ENCODE measurements at regions of chr5 and their contacts with region 1.

Region 1: DNA sequence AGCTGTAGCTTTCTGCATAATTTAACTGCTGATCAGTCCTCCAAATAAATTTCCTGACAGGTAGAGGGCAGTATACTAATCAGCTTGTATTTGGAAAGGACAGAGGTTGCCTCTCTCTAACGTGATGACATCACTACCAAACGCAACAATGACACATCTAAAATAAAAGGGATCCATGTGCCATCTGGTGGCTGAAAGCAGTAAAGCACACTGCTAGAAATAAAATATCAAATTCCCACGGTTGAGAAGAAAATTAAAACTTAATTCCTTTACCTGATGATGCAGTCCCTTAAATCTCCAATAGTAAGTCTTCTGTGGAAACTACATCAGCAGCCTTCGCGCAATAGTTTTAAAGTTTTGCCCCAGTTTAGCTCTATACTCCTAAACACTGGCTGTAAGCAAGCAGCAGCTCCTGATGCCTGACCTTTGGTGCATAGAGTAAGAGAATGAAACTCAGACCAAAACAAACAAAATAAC is 54.5 kb downstream of the DIAPH1 start:
- DNase-seq: peak; percentile 17 to 95 (median 63)
- ATAC-seq: peak; percentile 98
- H3K4me3 ChIP-seq: no peak overlapping the region
- H3K4me3 Mint-ChIP-seq: no peak overlapping the region
- H3K27ac ChIP-seq: peak overlapping the region in 1 of 2 experiments; percentile 76
- H3K27ac Mint-ChIP-seq: peak overlapping the region; percentile 78
- H3K4me1 ChIP-seq: no peaks in the 10 kb centered on the region
- H3K4me1 Mint-ChIP-seq: peaks cover 33% of the 10 kb centered on the region
- H3K27me3 ChIP-seq: no peaks in the 10 kb centered on the region
- H3K27me3 Mint-ChIP-seq: no peaks in the 10 kb centered on the region
- CTCF ChIP-seq: peak; percentile 92

Region 2: GRCh38 chr5:140690941-140691924 is 873.0 kb before region 1 on chr5 and contains the starts of genes HARS1 and HARS2:
- CTCF ChIA-PET with region 1: no interaction called
- POLR2A ChIA-PET with region 1: no interaction called
- intact Hi-C with region 1: loop called (anchors 10 kb)
- DNase-seq: peak; percentile 58 to 92 (median 83)
- ATAC-seq: peak; percentile 88
- H3K4me3 ChIP-seq: peak within 1 kb of the TSS; percentile 84 to 94
- H3K4me3 Mint-ChIP-seq: peak within 1 kb of the TSS; percentile 99
- H3K27ac ChIP-seq: peak within 1 kb of the TSS; percentile 77 to 87
- H3K27ac Mint-ChIP-seq: peak within 1 kb of the TSS; percentile 98
- H3K4me1 ChIP-seq: peaks cover 23% of the 10 kb centered on the region
- H3K4me1 Mint-ChIP-seq: peaks cover 48% of the 10 kb centered on the region
- H3K27me3 ChIP-seq: no peaks in the 10 kb centered on the region
- H3K27me3 Mint-ChIP-seq: no peaks in the 10 kb centered on the region
- CTCF ChIP-seq: no peak
- total RNA-seq, gene HARS1: 67.3 to 70.2 TPM
- total RNA-seq, gene HARS2: 41.3 to 43.2 TPM

Region 3: DNA sequence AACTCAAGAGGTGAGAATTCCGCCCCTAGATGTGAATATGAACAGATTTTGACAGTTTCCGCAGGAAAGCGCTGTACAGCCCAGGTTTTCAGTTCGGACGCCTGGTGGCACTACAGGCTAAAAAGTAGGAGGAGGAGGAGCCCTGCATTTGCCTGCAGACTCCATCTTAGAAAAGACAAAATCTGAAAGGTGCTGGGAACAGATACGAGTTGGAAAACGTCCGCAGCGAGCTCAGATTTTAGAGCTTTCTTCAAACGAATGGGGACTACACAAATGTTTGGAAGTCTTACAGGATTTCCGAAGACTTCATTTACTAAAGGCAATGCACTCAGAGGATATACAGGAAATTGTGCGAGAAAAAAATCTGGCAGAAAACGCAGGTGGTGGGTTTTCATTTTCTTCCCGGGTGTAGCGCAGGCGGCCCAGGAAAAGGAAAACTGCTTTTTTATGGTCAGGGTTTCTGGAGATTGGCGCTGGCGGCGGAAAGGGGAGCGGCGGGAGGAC is 479.7 kb before region 1 on chr5:
- CTCF ChIA-PET with region 1: interaction called, 8 read pairs
- POLR2A ChIA-PET with region 1: no interaction called
- intact Hi-C with region 1: loop called (anchors 2 to 5 kb)
- DNase-seq: peak in 7 of 9 experiments; percentile 2 to 61 (median 23)
- ATAC-seq: peak; percentile 63
- H3K4me3 ChIP-seq: peak overlapping the region; percentile 31 to 43
- H3K4me3 Mint-ChIP-seq: peak overlapping the region; percentile 85
- H3K27ac ChIP-seq: no peak overlapping the region
- H3K27ac Mint-ChIP-seq: no peak overlapping the region
- H3K4me1 ChIP-seq: no peaks in the 10 kb centered on the region
- H3K4me1 Mint-ChIP-seq: peaks cover 9% of the 10 kb centered on the region
- H3K27me3 ChIP-seq: peaks cover 0 to 3% of the 10 kb centered on the region in 2 experiments
- H3K27me3 Mint-ChIP-seq: peaks cover 38% of the 10 kb centered on the region
- CTCF ChIP-seq: peak; percentile 46

Region 4: GRCh38 chr5:141223112-141223783 is 341.0 kb before region 1 on chr5 and contains the start of gene PCDHB14:
- CTCF ChIA-PET with region 1: interaction called, 10 read pairs
- POLR2A ChIA-PET with region 1: no interaction called
- intact Hi-C with region 1: loop called (anchors 5 kb)
- DNase-seq: peak in 2 of 9 experiments; percentile 23 to 42
- ATAC-seq: no peak
- H3K4me3 ChIP-seq: no peak within 1 kb of the TSS
- H3K4me3 Mint-ChIP-seq: no peak within 1 kb of the TSS
- H3K27ac ChIP-seq: no peak within 1 kb of the TSS
- H3K27ac Mint-ChIP-seq: no peak within 1 kb of the TSS
- H3K4me1 ChIP-seq: no peaks in the 10 kb centered on the region
- H3K4me1 Mint-ChIP-seq: peaks cover 3% of the 10 kb centered on the region
- H3K27me3 ChIP-seq: peaks cover 0 to 13% of the 10 kb centered on the region in 2 experiments
- H3K27me3 Mint-ChIP-seq: peaks cover 61% of the 10 kb centered on the region
- CTCF ChIP-seq: no peak
- total RNA-seq, gene PCDHB14: not detected

Region 5: GRCh38 chr5:141326088-141326854 is 238.0 kb before region 1 on chr5:
- CTCF ChIA-PET with region 1: interaction called, 25 read pairs
- POLR2A ChIA-PET with region 1: interaction called, 3 read pairs
- intact Hi-C with region 1: loop called (anchors 1 to 2 kb)
- DNase-seq: peak; percentile 43 to 79 (median 73)
- ATAC-seq: peak; percentile 94
- H3K4me3 ChIP-seq: peak overlapping the region; percentile 42 to 56
- H3K4me3 Mint-ChIP-seq: peak overlapping the region; percentile 91
- H3K27ac ChIP-seq: peak overlapping the region; percentile 9 to 58
- H3K27ac Mint-ChIP-seq: peak overlapping the region; percentile 93
- H3K4me1 ChIP-seq: peaks cover 2% of the 10 kb centered on the region
- H3K4me1 Mint-ChIP-seq: peaks cover 8% of the 10 kb centered on the region
- H3K27me3 ChIP-seq: peaks cover 0 to 5% of the 10 kb centered on the region in 2 experiments
- H3K27me3 Mint-ChIP-seq: peaks cover 34% of the 10 kb centered on the region
- CTCF ChIP-seq: peak; percentile 62

Region 6: DNA sequence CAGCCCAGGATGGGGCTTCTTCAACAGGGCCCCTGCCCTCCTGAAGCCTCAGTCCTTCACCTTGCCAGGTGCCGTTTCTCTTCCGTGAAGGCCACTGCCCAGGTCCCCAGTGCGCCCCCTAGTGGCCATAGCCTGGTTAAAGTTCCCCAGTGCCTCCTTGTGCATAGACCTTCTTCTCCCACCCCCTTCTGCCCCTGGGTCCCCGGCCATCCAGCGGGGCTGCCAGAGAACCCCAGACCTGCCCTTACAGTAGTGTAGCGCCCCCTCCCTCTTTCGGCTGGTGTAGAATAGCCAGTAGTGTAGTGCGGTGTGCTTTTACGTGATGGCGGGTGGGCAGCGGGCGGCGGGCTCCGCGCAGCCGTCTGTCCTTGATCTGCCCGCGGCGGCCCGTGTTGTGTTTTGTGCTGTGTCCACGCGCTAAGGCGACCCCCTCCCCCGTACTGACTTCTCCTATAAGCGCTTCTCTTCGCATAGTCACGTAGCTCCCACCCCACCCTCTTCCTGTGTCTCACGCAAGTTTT is 51.8 kb before region 1 on chr5:
- CTCF ChIA-PET with region 1: interaction called, 25 read pairs
- POLR2A ChIA-PET with region 1: no interaction called
- intact Hi-C with region 1: loop called in 1 of 2 experiments (anchors 2 kb)
- DNase-seq: peak; percentile 68 to 91 (median 82)
- ATAC-seq: peak; percentile 51
- H3K4me3 ChIP-seq: peak overlapping the region; percentile 50 to 54
- H3K4me3 Mint-ChIP-seq: peak overlapping the region; percentile 87
- H3K27ac ChIP-seq: no peak overlapping the region
- H3K27ac Mint-ChIP-seq: no peak overlapping the region
- H3K4me1 ChIP-seq: peaks cover 21% of the 10 kb centered on the region
- H3K4me1 Mint-ChIP-seq: peaks cover 36% of the 10 kb centered on the region
- H3K27me3 ChIP-seq: no peaks in the 10 kb centered on the region
- H3K27me3 Mint-ChIP-seq: no peaks in the 10 kb centered on the region
- CTCF ChIP-seq: peak; percentile 83

Region 7: DNA sequence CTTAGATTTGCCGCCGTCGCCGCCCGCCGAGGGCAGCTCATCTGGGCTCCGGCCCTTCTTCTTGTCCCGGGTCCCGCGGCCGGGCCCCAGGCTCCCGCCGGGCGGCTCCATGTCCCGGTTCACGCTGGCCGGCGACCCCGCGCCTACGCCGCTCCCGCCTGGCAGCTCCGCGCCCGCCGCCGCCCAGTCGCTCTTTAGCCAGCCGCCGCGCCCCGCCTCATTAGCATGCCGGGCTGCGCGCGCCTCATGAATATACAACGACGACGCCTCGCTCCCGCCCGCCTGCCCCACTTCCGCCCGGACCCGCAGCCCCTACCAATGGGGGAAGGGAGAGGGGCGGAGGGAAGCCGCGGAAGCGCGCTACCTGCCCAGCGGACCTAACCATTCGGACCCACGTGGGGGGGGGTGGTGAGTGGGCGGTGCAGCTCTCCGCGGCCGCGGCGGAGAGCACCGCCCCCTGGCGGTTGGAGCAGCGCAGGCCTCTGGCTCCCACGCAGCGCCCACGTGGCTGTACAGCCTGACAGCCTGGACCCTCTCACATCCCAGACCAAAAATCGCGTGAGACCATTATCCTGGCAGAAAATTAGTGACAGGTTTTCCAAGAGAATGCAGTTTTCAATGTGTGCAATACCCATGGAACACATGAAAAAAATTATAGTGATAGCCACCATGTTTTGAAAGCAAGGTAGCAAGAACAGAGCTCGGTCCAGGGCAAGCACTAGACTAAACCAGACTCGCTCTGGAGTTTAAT is 54.7 kb after region 1 on chr5 and contains the start of gene DIAPH1:
- CTCF ChIA-PET with region 1: interaction called, 24 read pairs
- POLR2A ChIA-PET with region 1: interaction called, 3 read pairs
- intact Hi-C with region 1: loop called (anchors 1 to 2 kb)
- DNase-seq: peak; percentile 95 to 99 (median 99)
- ATAC-seq: peak; percentile 91
- H3K4me3 ChIP-seq: peak within 1 kb of the TSS; percentile 90 to 95
- H3K4me3 Mint-ChIP-seq: peak within 1 kb of the TSS; percentile 97
- H3K27ac ChIP-seq: peak within 1 kb of the TSS; percentile 77 to 94
- H3K27ac Mint-ChIP-seq: peak within 1 kb of the TSS; percentile 97
- H3K4me1 ChIP-seq: peaks cover 31% of the 10 kb centered on the region
- H3K4me1 Mint-ChIP-seq: peaks cover 52% of the 10 kb centered on the region
- H3K27me3 ChIP-seq: no peaks in the 10 kb centered on the region
- H3K27me3 Mint-ChIP-seq: no peaks in the 10 kb centered on the region
- CTCF ChIP-seq: peak; percentile 88
- total RNA-seq, gene DIAPH1: 155 to 166 TPM

Measured in CD8-positive, alpha-beta T cell (primary cell).